ENCODE measurements at regions of chr16 and their contacts with region 1.

Region 1: DNA sequence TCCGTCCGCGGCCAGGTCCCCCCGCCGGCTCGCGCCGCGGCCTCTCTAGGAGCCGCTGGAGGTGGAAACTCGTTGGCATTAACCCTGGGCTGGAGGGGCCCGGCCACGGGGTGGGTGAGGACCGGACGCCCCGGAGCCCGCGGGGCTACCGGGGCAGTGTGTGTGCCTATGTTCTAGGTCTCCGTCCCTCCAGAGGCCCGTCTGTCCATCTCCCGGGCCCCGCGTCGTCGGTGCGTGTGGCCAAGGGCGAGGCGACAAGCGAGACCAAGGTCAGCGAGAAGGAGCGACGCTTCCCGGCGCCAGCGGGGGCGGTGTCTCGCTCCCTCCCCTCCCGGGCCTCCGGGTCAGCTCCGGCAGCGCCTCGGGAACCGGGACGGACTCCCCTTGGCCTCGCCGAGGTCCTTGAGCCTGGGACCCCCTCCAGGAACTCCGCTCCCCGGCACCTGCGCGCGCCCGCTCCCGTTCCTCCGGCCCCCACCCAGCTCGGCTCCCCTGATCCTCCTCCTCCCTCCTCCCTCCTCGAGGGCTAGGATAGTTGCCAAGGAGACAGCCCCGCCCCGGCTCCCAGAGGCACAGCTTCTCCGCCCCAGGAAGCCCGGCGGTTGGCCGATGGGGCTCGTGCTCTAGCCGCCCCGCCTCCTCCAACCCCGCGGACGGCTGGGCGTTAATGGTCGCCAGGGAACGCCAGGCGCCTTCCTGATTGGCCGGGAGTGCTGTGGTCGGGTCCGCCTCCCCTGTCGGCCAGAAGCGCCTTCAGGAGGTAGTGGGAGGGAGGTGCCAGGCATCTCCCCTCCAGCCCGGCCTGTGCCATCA is 663 bp upstream of the ZNF768 start:
- DNase-seq: peak; percentile 93
- ATAC-seq: peak; percentile 84
- H3K4me3 Mint-ChIP-seq: peak overlapping the region; percentile 89
- H3K27ac Mint-ChIP-seq: peak overlapping the region; percentile 99
- H3K4me1 Mint-ChIP-seq: peaks cover 21% of the 10 kb centered on the region
- H3K27me3 Mint-ChIP-seq: no peaks in the 10 kb centered on the region
- CTCF ChIP-seq: no peak

Region 2: GRCh38 chr16:30091474-30092372 is 435.3 kb before region 1 on chr16 and contains the start of gene TBX6:
- CTCF ChIA-PET with region 1: no interaction called
- POLR2A ChIA-PET with region 1: interaction called, 3 read pairs
- intact Hi-C with region 1: loop called (anchors 5 kb)
- DNase-seq: peak; percentile 93
- ATAC-seq: peak; percentile 77
- H3K4me3 Mint-ChIP-seq: peak within 1 kb of the TSS; percentile 89
- H3K27ac Mint-ChIP-seq: peak within 1 kb of the TSS; percentile 94
- H3K4me1 Mint-ChIP-seq: peaks cover 50% of the 10 kb centered on the region
- H3K27me3 Mint-ChIP-seq: no peaks in the 10 kb centered on the region
- CTCF ChIP-seq: peak; percentile 67
- total RNA-seq, gene TBX6: 2.3 TPM in 2 replicates

Region 3: DNA sequence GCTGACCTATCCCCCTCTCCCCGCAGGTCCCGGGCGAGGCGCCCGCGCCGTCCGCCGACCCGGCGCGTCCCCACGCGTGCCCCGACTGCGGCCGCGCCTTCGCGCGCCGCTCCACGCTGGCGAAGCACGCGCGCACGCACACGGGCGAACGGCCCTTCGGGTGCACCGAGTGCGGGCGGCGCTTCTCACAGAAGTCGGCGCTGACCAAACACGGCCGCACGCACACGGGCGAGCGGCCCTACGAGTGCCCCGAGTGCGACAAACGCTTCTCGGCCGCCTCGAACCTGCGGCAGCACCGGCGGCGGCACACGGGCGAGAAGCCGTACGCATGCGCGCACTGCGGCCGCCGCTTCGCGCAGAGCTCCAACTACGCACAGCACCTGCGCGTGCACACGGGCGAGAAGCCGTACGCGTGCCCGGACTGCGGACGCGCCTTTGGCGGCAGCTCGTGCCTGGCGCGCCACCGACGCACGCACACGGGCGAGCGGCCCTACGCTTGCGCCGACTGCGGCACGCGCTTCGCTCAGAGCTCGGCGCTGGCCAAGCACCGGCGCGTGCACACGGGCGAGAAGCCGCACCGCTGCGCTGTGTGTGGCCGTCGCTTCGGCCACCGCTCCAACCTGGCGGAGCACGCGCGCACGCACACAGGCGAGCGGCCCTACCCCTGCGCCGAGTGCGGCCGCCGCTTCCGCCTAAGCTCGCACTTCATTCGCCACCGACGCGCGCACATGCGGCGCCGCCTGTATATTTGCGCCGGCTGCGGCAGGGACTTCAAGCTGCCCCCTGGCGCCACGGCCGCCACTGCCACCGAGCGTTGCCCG is 109.3 kb before region 1 on chr16:
- CTCF ChIA-PET with region 1: interaction called, 5 read pairs
- POLR2A ChIA-PET with region 1: interaction called, 12 read pairs
- intact Hi-C with region 1: no loop called
- DNase-seq: peak; percentile 84
- ATAC-seq: peak; percentile 86
- H3K4me3 Mint-ChIP-seq: peak overlapping the region; percentile 71
- H3K27ac Mint-ChIP-seq: peak overlapping the region; percentile 69
- H3K4me1 Mint-ChIP-seq: peaks cover 12% of the 10 kb centered on the region
- H3K27me3 Mint-ChIP-seq: no peaks in the 10 kb centered on the region
- CTCF ChIP-seq: no peak

Region 4: GRCh38 chr16:30472328-30472942 is 54.6 kb before region 1 on chr16 and contains the start of gene ITGAL:
- CTCF ChIA-PET with region 1: no interaction called
- POLR2A ChIA-PET with region 1: interaction called, 11 read pairs
- intact Hi-C with region 1: loop called (anchors 1 kb)
- DNase-seq: peak; percentile 59
- ATAC-seq: peak; percentile 65
- H3K4me3 Mint-ChIP-seq: peak within 1 kb of the TSS; percentile 89
- H3K27ac Mint-ChIP-seq: peak within 1 kb of the TSS; percentile 94
- H3K4me1 Mint-ChIP-seq: peaks cover 60% of the 10 kb centered on the region
- H3K27me3 Mint-ChIP-seq: no peaks in the 10 kb centered on the region
- CTCF ChIP-seq: no peak
- total RNA-seq, gene ITGAL: 216 and 240 TPM in 2 replicates

Region 5: DNA sequence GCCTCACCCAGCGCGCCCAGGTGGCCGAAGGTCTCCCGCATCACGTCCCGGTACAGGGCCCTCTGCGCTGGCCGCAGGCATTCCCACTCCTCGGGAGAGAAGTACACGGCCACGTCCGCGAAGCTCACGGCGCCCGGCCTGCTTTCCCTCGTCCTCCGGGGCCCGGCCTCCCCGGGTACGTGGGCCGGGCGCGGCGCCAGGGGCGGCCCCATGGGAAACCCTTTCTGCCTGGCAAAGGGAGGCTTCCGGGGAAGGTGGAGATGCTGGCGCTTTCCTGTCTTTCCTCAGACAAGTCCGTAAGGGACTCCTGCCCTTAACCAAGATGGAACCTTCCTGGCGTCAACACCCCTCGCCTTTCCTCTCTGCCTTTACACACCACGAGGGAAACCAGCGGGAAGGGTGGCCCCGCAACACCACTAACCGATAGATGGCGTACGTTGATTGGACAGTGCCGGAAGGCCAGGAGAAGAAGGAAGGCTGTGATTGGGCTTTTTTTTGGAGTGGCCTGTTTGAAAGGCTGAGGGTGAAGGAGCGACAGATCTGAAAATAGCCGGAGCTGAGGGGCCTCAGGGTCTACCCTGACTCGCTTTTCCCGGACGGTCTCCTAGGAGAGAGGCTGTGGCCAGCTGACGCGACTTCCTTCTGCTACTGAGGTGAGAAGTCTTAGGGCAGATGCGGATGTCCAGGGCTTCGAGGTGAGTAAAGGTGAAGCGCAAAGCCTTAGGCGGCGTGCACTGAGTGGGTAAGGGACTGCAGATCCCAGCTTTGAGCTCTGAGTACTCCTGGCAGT is 58.6 kb after region 1 on chr16 and contains the start of gene ZNF785:
- CTCF ChIA-PET with region 1: no interaction called
- POLR2A ChIA-PET with region 1: interaction called, 4 read pairs
- intact Hi-C with region 1: loop called (anchors 1 kb)
- DNase-seq: peak; percentile 76
- ATAC-seq: peak; percentile 99
- H3K4me3 Mint-ChIP-seq: peak within 1 kb of the TSS; percentile 85
- H3K27ac Mint-ChIP-seq: peak within 1 kb of the TSS; percentile 79
- H3K4me1 Mint-ChIP-seq: peaks cover 19% of the 10 kb centered on the region
- H3K27me3 Mint-ChIP-seq: no peaks in the 10 kb centered on the region
- CTCF ChIP-seq: no peak
- total RNA-seq, gene ZNF785: 20.0 and 22.8 TPM in 2 replicates

Region 6: DNA sequence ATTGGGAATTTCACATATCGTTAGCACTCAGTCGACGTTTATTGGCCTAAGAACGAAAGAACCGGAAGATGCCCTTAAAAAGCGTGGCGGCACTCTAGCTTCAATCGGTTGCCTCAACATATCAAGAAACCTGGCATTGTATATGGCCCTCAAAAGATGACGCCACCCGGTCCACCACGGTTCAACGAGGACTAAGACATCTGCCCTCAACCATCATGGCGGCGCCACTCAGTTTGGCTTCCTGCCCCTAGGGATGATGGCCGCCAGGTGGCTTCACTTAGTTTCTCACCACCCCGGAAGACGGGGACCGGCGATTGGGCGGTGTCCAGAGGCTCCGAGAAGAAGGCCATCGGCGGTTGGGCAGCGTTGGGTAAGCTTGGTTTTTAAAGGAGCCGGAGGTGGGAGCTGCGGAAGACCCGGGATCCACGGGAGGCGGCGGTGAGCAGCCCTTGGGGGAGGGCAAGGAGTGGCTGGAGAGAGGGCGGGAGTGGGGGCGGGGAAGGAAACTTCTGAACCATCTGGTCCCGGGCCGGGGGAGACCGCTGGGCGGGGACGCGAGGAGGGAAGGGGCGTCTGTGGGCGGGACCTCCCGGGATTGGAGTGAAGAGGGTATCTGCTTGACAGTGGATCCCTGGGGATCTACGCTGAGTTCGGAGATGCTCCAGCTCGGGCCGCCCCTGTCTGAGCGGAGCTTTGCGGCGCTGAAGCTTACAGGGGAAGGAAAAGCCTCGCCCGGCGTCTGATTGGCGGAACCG is 123.5 kb after region 1 on chr16 and contains the start of gene PRR14:
- CTCF ChIA-PET with region 1: no interaction called
- POLR2A ChIA-PET with region 1: interaction called, 9 read pairs
- intact Hi-C with region 1: loop called (anchors 2 kb)
- DNase-seq: peak; percentile 90
- ATAC-seq: peak; percentile 72
- H3K4me3 Mint-ChIP-seq: peak within 1 kb of the TSS; percentile 96
- H3K27ac Mint-ChIP-seq: peak within 1 kb of the TSS; percentile 95
- H3K4me1 Mint-ChIP-seq: peaks cover 24% of the 10 kb centered on the region
- H3K27me3 Mint-ChIP-seq: no peaks in the 10 kb centered on the region
- CTCF ChIP-seq: no peak
- total RNA-seq, gene PRR14: 63.5 and 77.9 TPM in 2 replicates